ENCODE measurements at regions of chr22 and their contacts with region 1.

Region 1: DNA sequence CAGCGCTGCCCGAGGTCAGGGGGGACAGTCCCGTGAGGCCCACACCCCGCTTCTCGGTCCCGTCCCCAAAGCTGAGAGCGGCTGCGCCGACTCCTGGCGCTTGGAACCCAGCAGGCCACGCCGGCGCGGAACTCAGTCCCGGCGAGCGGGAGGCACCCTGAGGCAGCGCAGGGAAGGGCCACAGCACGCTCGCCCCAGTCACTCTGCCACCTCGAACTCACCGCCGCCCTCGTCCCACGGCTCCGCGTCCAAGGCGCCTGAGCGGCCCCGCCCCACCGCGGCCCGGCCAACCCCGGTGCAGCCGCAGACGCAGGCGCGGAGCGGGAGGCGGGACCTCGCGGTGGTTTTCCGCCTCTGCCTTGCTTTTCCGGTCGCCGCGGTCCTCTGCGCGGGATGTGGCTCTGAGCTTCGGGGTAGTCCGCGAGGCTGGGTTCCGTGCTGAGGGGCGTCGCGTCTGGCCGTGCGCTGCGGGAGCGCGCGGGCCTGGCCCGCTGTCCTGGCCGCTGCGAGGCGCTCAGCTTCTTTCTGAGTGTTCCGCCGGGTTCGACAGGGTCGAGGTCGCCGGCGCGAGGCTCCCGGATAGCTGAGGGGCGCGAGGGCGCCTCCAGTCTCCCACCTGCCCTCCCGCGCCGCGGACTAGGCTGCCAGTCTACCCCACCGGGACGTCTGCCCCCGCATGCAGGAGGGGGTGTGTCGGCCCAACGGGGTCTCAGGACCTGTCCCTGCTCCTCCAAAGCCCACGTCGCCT is at the start of gene CDPF1:
- DNase-seq: peak; percentile 43 to 94
- H3K4me3 ChIP-seq: peak within 1 kb of the TSS; percentile 88 to 98
- H3K27ac ChIP-seq: peak within 1 kb of the TSS; percentile 82
- H3K4me1 ChIP-seq: peaks cover 10 to 11% of the 10 kb centered on the region in 2 donors
- H3K27me3 ChIP-seq: no peaks in the 10 kb centered on the region
- CTCF ChIP-seq: peak in 1 of 3 experiments; percentile 12
- total RNA-seq, gene CDPF1: 3.6 TPM

Region 2: DNA sequence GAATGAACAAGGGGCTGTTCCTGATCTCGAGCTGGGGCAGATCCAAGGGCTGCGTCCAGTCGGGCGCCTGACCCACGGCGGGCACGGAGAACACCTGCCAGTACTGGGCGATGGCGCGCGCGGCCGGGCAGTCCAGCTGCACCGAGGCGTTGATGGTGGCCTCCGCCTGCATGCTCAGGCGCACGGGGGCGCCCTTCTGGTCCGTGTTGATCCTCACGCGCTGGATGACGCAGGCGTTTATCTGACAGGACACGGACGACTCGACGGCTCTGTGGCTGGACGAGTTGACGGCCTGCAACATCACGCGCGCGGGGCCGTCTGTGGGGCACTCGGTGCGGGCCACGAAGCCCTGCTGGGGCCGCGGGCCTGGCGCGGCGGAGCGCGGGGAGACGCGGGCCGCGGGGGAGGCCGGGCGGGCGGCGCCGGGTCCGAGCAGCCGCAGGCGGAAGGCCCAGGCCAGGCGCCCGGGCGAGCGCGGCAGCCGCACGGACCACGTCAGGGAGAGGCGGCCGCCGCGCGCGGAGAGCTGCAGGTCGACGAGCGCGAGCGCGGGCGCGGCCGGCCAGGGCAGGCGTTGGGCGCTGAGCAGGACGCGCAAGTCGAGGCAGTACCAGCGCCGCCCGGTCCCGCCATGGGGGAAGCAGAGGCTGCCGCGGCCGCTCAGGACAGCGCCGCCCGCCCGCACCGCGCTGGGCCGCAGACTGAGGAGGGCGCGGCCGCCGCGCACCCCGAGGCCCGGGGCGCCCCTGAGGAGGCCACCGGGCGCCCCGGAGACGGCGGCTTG is 12.4 kb after region 1 on chr22:
- intact Hi-C with region 1: loop called (anchors 1 kb)
- DNase-seq: peak in 1 of 2 donors; percentile 84
- H3K4me3 ChIP-seq: peak overlapping the region; percentile 41 to 59
- H3K27ac ChIP-seq: no peak overlapping the region
- H3K4me1 ChIP-seq: peaks cover 0 to 8% of the 10 kb centered on the region in 2 donors
- H3K27me3 ChIP-seq: no peaks in the 10 kb centered on the region
- CTCF ChIP-seq: peak; percentile 13 to 26 (median 25)

Region 3: DNA sequence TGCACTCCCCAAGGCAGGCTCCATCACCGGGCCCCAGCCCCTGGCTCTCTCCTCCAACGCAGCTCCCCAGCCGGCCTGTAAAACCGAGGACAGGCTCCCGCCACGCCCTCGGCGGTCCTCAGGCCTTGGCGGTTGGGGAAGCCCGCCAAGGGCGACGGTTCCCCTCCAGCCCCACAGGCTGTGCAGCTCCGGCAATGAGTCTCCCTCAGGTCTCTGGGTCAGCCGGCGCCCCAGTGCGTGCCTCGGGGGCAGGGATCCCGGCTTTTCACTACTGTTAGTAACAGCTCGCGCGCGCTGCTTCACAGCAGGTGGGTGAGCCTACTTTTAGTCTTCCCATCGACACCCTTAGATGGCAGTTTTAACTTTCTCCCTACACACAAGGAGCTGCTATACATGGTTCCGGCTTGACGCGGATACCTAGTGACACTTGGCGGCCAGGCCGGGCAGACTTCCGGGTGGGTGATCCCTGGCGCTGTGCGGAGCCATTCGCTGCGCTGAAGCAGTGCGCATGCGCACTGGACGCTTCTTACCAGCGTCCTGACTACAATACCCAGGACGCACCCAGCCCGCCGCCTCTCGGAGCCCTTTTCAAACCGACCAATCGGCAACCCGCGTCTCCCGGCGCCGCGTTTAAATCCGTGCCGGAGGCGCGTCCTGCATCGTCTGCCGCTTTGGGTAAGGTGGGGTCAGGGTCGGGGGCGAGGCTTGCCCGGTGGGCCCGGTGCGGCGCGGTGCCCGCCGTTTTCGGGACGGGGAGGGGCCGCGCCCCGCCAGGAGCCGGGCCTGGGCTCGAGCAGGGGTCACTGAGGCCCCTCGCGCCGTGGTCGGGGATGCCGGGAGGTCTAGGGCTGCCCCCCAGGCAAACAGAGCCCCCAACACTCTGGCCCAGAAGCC is 46.3 kb after region 1 on chr22 and contains the start of gene GTSE1:
- intact Hi-C with region 1: loop called (anchors 1 kb)
- DNase-seq: peak; percentile 94 to 99
- H3K4me3 ChIP-seq: peak within 1 kb of the TSS; percentile 64 to 69
- H3K27ac ChIP-seq: peak within 1 kb of the TSS; percentile 87 to 95
- H3K4me1 ChIP-seq: peaks cover 0 to 14% of the 10 kb centered on the region in 2 donors
- H3K27me3 ChIP-seq: no peaks in the 10 kb centered on the region
- CTCF ChIP-seq: peak in 1 of 3 experiments; percentile 23
- total RNA-seq, gene GTSE1: not detected

Region 4: DNA sequence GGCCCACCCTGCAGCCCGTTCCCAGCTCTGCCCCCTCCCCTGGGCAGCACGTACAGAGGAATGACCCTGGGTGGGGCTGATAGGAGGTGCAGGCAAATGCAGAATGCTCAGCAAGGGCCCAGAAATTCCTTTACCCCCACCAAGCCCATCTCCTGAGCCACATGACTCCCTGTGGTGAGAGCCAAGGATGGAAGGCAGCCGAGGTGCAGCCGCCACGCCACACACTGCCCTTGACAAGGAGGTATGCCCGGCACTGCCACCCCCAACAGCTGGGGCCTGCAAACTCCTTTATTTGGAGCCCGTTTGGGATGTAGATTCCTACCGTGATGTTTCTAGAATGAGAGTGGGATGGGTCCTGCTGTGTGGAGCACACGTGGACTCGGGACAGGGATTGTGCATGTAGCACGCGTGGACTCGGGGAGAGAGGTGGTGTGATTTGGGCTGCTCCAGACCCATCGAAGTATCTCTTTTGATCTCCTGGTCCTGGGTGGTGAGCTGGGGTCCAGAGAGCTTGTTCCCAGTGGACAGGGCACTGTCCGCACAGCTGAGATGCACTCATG is 59.4 kb after region 1 on chr22:
- intact Hi-C with region 1: no loop called
- DNase-seq: no peak
- H3K4me3 ChIP-seq: no peak overlapping the region
- H3K27ac ChIP-seq: no peak overlapping the region
- H3K4me1 ChIP-seq: no peaks in the 10 kb centered on the region
- H3K27me3 ChIP-seq: no peaks in the 10 kb centered on the region
- CTCF ChIP-seq: no peak

Measured in ascending aorta (tissue), 2 donors.